ENCODE measurements at regions of chr20 and their contacts with region 1.

Region 1: DNA sequence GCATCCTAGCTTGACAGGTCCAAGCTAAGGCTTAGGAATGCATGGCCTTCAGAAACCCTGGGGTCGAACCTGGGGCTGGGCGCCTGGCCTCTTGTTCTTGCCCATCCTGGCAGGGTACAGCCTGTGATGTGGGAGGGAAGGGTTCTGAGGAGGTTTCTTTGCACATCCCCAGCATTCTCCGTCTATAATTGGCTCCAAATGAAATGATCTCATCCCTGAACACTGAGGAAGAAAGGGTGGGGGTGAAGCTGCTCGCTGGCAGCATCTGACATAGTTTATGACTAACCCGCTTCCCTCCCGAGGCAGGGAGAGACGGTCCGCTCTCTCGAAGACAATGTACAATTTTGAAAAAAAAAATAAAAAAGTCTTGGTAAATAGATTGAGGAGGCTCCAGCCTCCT is 67.1 kb upstream of the ZNFX1 start:
- DNase-seq: peak; percentile 84
- H3K4me3 ChIP-seq: peak overlapping the region in 1 of 3 experiments; percentile 16
- H3K27ac ChIP-seq: peak overlapping the region; percentile 78
- H3K4me1 ChIP-seq: peaks cover 19% of the 10 kb centered on the region
- H3K27me3 ChIP-seq: no peaks in the 10 kb centered on the region
- CTCF ChIP-seq: no peak

Region 2: GRCh38 chr20:49384437-49385088 is 39.6 kb after region 1 on chr20:
- CTCF ChIA-PET with region 1: no interaction called
- dilution Hi-C with region 1: no loop called
- in situ Hi-C with region 1: no loop called
- intact Hi-C with region 1: loop called (anchors 2 kb)
- DNase-seq: no peak
- H3K4me3 ChIP-seq: no peak overlapping the region
- H3K27ac ChIP-seq: no peak overlapping the region
- H3K4me1 ChIP-seq: peaks cover 17% of the 10 kb centered on the region
- H3K27me3 ChIP-seq: no peaks in the 10 kb centered on the region
- CTCF ChIP-seq: peak; percentile 64 to 77

Region 3: DNA sequence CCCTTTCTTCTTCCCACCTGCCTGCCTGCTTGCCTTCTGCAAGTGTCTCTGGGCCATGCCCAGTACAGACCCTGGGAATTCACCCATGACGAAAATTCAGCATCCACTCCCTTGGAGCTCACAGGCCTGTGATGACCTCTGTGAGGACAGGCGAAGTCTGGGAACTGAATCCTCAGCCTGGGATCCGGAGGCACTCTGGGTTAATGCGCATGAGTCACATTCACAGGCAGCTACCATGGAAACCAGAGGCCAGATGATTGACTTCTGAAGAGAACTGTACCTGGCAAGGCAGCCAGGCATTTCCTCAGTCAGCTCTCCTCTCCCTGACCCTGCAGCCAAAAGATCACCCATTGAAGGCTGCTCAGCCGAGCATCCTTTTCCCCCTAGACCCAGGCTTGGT is 508.7 kb after region 1 on chr20:
- CTCF ChIA-PET with region 1: no interaction called
- dilution Hi-C with region 1: no loop called
- in situ Hi-C with region 1: loop called in 1 of 2 experiments (anchors 25 kb)
- intact Hi-C with region 1: no loop called
- DNase-seq: peak; percentile 76
- H3K4me3 ChIP-seq: no peak overlapping the region
- H3K27ac ChIP-seq: no peak overlapping the region
- H3K4me1 ChIP-seq: peaks cover 21% of the 10 kb centered on the region
- H3K27me3 ChIP-seq: no peaks in the 10 kb centered on the region
- CTCF ChIP-seq: no peak

Measured in mammary epithelial cell (primary cell).